WTC11 (cell line): ENCODE measurements at regions of chr2 and their contacts with region 1.

Region 1: GRCh38 chr2:218898109-218898878 is 17.6 kb downstream of the WNT10A start:
- DNase-seq: peak; percentile 94
- ATAC-seq: peak; percentile 72
- H3K4me3 Mint-ChIP-seq: peak overlapping the region; percentile 49
- H3K27ac Mint-ChIP-seq: no peak overlapping the region
- H3K4me1 Mint-ChIP-seq: peaks cover 24% of the 10 kb centered on the region
- H3K27me3 Mint-ChIP-seq: peaks cover 99% of the 10 kb centered on the region
- CTCF ChIP-seq: peak; percentile 98

Region 2: GRCh38 chr2:218710687-218711549 is 187.4 kb before region 1 on chr2 and contains the start of gene TTLL4:
- CTCF ChIA-PET with region 1: interaction called, 11 read pairs
- POLR2A ChIA-PET with region 1: no interaction called
- DNase-seq: peak; percentile 97
- ATAC-seq: peak; percentile 93
- H3K4me3 Mint-ChIP-seq: peak within 1 kb of the TSS; percentile 98
- H3K27ac Mint-ChIP-seq: peak within 1 kb of the TSS; percentile 56; the same call in 1 of the 2 replicates
- H3K4me1 Mint-ChIP-seq: peaks cover 11% of the 10 kb centered on the region
- H3K27me3 Mint-ChIP-seq: no peaks in the 10 kb centered on the region; the same call in 1 of the 2 replicates
- CTCF ChIP-seq: peak; percentile 28; the same call in 1 of the 2 replicates
- total RNA-seq, gene TTLL4: 73.7 to 87.4 TPM (median 77.1 TPM) in 3 replicates

Region 3: DNA sequence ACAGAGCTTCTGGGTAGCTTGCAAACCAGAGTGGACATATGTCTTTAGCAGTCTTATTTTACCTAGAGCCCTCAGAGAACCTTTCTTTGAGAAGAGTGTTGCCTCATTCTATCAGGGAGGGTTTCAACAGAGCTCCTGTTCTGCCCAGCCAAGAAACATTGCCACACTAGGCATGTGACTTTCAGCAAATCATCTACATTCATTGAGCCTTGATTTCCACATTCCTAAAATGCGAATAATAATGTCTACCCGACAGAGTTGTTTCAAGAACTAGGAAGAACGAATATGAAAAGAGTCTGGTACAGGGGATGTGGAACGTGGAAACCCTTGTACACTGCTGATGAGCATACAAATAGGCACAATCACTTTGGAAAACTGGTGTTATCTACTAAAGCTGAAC is 58.9 kb before region 1 on chr2:
- CTCF ChIA-PET with region 1: no interaction called
- POLR2A ChIA-PET with region 1: no interaction called
- DNase-seq: no peak
- ATAC-seq: no peak
- H3K4me3 Mint-ChIP-seq: no peak overlapping the region
- H3K27ac Mint-ChIP-seq: no peak overlapping the region
- H3K4me1 Mint-ChIP-seq: no peaks in the 10 kb centered on the region
- H3K27me3 Mint-ChIP-seq: peaks cover 14% of the 10 kb centered on the region
- CTCF ChIP-seq: no peak

Region 4: GRCh38 chr2:218860950-218861381 is 37.3 kb before region 1 on chr2:
- CTCF ChIA-PET with region 1: interaction called, 39 read pairs
- POLR2A ChIA-PET with region 1: interaction called, 3 read pairs
- DNase-seq: peak; percentile 87
- ATAC-seq: peak; percentile 94
- H3K4me3 Mint-ChIP-seq: peak overlapping the region; percentile 69
- H3K27ac Mint-ChIP-seq: no peak overlapping the region
- H3K4me1 Mint-ChIP-seq: peaks cover 38% of the 10 kb centered on the region
- H3K27me3 Mint-ChIP-seq: peaks cover 93% of the 10 kb centered on the region
- CTCF ChIP-seq: no peak

Region 5: DNA sequence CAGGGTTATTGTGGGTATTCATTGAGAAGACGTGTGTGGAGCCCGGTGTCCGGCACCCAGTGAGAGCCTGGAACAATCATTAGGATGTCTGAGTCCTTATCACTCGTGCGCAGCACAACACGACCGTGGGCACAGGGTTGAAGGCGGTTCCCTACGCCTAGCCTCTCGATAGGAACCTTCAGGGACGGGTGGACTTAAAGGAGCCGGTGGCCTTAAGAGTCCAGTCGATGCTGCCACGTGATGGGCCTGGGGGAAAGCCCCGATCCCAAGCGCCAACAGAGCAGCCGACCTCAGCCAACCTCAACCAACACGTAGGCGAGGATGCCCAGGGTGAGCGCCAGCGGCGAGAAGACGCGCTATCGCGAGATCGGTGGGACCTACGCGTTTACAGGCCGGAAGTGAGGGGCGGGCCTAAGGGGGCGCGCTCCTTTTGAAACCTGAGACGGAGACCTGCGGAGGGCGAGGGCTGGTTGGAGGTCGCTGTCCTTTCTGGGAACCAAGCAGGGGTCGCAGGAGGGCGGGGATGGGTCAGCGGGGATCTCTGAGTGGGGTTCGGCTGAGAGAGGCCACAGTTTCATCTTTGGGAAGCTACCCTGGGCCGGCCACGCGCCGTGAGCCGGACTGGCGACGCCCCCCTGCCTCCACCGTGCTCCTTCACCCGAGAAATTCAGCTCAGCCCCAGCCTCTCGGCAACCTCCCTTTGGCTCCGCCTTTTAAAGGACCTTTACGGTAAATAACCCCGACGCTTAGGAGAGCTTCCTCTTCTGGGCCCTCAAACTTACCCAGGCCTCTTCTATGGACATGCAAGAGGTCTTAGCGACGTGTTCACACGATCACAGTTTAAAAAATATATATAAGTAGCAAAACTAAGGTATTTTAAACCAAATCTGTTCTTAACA is 10.7 kb after region 1 on chr2:
- CTCF ChIA-PET with region 1: interaction called, 36 read pairs
- POLR2A ChIA-PET with region 1: interaction called, 3 read pairs
- DNase-seq: peak; percentile 96
- ATAC-seq: peak; percentile 97
- H3K4me3 Mint-ChIP-seq: peak overlapping the region; percentile 75
- H3K27ac Mint-ChIP-seq: no peak overlapping the region
- H3K4me1 Mint-ChIP-seq: peaks cover 13% of the 10 kb centered on the region
- H3K27me3 Mint-ChIP-seq: peaks cover 63% of the 10 kb centered on the region
- CTCF ChIP-seq: no peak

Region 6: GRCh38 chr2:218953481-218953881 is 55.2 kb after region 1 on chr2:
- CTCF ChIA-PET with region 1: interaction called, 25 read pairs
- POLR2A ChIA-PET with region 1: no interaction called
- DNase-seq: peak; percentile 61
- ATAC-seq: peak; percentile 81
- H3K4me3 Mint-ChIP-seq: no peak overlapping the region
- H3K27ac Mint-ChIP-seq: no peak overlapping the region
- H3K4me1 Mint-ChIP-seq: no peaks in the 10 kb centered on the region
- H3K27me3 Mint-ChIP-seq: peaks cover 68% of the 10 kb centered on the region
- CTCF ChIP-seq: no peak

Region 7: GRCh38 chr2:219002395-219003266 is 104.3 kb after region 1 on chr2:
- CTCF ChIA-PET with region 1: interaction called, 17 read pairs
- POLR2A ChIA-PET with region 1: no interaction called
- DNase-seq: peak; percentile 95
- ATAC-seq: peak; percentile 69
- H3K4me3 Mint-ChIP-seq: peak overlapping the region; percentile 83
- H3K27ac Mint-ChIP-seq: no peak overlapping the region
- H3K4me1 Mint-ChIP-seq: peaks cover 22% of the 10 kb centered on the region
- H3K27me3 Mint-ChIP-seq: peaks cover 100% of the 10 kb centered on the region
- CTCF ChIP-seq: peak; percentile 29; the same call in 1 of the 2 replicates